Activated naive CD4-positive, alpha-beta T cell treated with anti-CD3 and anti-CD28 coated beads, Interleukin-2, amount 10 ng/mL, durations not matched to agents 7 days and 5 days (primary cell): ENCODE measurements at regions of chr3 and their contacts with region 1.

Region 1: GRCh38 chr3:19348929-19349564 is 200.7 kb downstream of the KCNH8 start:
- DNase-seq: no peak
- H3K4me3 Mint-ChIP-seq: no peak overlapping the region
- H3K27ac Mint-ChIP-seq: no peak overlapping the region
- H3K4me1 Mint-ChIP-seq: no peaks in the 10 kb centered on the region
- H3K27me3 Mint-ChIP-seq: no peaks in the 10 kb centered on the region

Region 2: GRCh38 chr3:19093084-19093483 is 256.0 kb before region 1 on chr3:
- CTCF ChIA-PET with region 1: no interaction called
- DNase-seq: no peak
- H3K4me3 Mint-ChIP-seq: no peak overlapping the region
- H3K27ac Mint-ChIP-seq: no peak overlapping the region
- H3K4me1 Mint-ChIP-seq: peaks cover 3% of the 10 kb centered on the region
- H3K27me3 Mint-ChIP-seq: no peaks in the 10 kb centered on the region

Region 3: GRCh38 chr3:19139862-19140261 is 209.2 kb before region 1 on chr3:
- CTCF ChIA-PET with region 1: no interaction called
- DNase-seq: no peak
- H3K4me3 Mint-ChIP-seq: no peak overlapping the region
- H3K27ac Mint-ChIP-seq: no peak overlapping the region
- H3K4me1 Mint-ChIP-seq: no peaks in the 10 kb centered on the region
- H3K27me3 Mint-ChIP-seq: peaks cover 10% of the 10 kb centered on the region

Region 4: GRCh38 chr3:19420159-19420558 is 71.1 kb after region 1 on chr3:
- CTCF ChIA-PET with region 1: no interaction called
- DNase-seq: no peak
- H3K4me3 Mint-ChIP-seq: no peak overlapping the region
- H3K27ac Mint-ChIP-seq: no peak overlapping the region
- H3K4me1 Mint-ChIP-seq: no peaks in the 10 kb centered on the region
- H3K27me3 Mint-ChIP-seq: no peaks in the 10 kb centered on the region

Region 5: GRCh38 chr3:19662486-19662885 is 313.4 kb after region 1 on chr3:
- CTCF ChIA-PET with region 1: no interaction called
- DNase-seq: no peak
- H3K4me3 Mint-ChIP-seq: no peak overlapping the region
- H3K27ac Mint-ChIP-seq: no peak overlapping the region
- H3K4me1 Mint-ChIP-seq: no peaks in the 10 kb centered on the region
- H3K27me3 Mint-ChIP-seq: no peaks in the 10 kb centered on the region

Region 6: GRCh38 chr3:19866751-19867347 is 517.8 kb after region 1 on chr3:
- CTCF ChIA-PET with region 1: interaction called, 23 read pairs
- DNase-seq: peak; percentile 56
- H3K4me3 Mint-ChIP-seq: no peak overlapping the region
- H3K27ac Mint-ChIP-seq: no peak overlapping the region
- H3K4me1 Mint-ChIP-seq: no peaks in the 10 kb centered on the region
- H3K27me3 Mint-ChIP-seq: peaks cover 5% of the 10 kb centered on the region